ENCODE measurements at regions of chr7 and their contacts with region 1.

Region 1: DNA sequence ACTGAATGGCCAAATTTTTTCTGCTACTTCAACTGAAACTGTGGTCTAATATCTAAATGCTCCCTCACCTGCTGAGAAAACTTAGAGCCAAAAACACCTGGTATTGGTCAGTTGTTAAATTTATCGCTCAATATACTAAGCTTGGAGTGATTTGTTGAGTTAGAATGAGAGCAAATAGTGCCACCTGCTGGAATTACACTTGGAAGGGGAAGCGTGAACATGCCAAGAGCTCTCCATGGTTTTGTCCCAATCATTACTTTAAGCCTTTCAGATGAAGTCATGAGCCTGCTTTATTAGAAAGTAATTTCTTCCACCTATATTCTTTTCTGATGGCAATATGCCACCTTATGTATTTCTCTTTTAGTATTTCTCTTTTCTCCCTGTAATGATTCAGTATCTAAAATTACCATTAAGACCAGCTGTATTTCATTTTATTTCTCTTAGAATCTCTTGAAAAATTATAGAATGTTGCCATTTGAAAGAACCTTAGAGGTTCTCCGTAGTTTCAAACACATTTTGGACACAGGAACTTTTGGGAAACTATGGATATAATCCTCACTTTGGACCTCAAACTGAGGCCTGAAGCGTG is 447.8 kb upstream of the C7orf33 start:
- DNase-seq: peak; percentile 59
- H3K4me3 Mint-ChIP-seq: no peak overlapping the region
- H3K27ac Mint-ChIP-seq: no peak overlapping the region
- H3K4me1 Mint-ChIP-seq: no peaks in the 10 kb centered on the region
- H3K27me3 Mint-ChIP-seq: peaks cover 54% of the 10 kb centered on the region
- CTCF ChIP-seq: peak; percentile 63

Region 2: DNA sequence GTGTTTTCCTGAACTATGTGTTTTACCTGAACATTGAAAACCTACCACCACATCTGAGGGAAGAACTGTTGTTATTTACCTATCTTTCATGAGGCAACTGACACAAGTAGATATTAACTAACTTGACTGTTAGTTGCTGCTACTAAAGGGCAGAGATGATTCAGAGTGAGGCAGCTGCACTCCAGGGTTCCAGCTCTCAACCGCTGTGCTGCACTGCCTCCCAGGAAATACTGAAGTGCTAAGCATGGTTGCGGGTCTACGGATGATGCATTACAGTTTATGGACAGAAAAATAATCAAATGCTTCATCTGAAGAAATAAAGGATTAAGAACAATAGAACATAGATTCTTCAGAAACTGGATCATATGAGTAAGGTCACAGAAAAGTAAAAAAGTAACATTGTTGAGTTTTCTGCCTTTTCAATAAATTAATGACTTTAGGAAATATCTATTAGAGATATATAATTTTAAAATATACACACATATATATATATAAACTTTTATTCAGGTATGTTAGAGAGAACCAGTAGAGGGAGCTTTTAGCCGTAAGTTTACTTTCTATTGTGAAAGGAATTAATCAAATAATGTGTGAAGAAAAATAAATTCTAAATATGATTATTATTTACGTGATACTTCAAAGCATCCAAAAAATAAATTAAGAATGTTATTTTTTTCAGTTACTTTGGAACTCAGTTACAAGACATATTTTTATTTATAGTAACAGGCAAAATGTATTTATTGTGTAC is 1406.1 kb before region 1 on chr7:
- CTCF ChIA-PET with region 1: interaction called, 3 read pairs
- POLR2A ChIA-PET with region 1: no interaction called
- intact Hi-C with region 1: loop called (anchors 2 kb)
- DNase-seq: peak; percentile 22
- H3K4me3 Mint-ChIP-seq: no peak overlapping the region
- H3K27ac Mint-ChIP-seq: no peak overlapping the region
- H3K4me1 Mint-ChIP-seq: no peaks in the 10 kb centered on the region
- H3K27me3 Mint-ChIP-seq: peaks cover 45% of the 10 kb centered on the region
- CTCF ChIP-seq: peak; percentile 27

Region 3: DNA sequence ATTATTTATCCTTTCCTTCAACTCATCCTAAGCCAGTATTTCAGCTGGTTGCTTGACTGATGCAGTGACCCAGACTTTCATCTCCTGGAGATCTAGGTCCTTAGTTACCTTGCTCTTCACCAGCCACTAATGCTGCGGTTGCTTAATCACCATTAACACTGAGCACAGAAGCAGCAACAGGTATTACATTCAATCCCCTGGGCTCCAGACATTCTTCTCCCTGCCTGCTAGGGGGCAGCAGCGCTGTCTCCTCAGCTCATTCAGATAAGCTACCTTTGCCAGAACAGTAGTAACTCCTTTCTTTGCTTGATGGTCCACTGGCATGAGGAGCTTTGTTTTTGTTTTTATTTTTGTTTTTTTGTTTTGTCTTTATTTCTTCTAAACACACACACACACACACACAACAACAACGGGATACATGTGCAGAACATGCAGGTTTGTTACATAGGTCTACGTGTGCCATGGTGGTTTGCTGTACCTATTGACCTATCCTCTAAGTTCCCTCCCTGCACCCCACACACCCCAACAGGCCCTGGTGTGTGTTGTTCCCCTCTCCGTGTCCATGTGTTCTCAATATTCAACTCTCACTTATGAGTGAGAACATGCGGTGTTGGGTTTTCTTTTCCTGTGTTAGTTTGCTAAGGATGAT is 595.4 kb before region 1 on chr7:
- CTCF ChIA-PET with region 1: no interaction called
- POLR2A ChIA-PET with region 1: no interaction called
- intact Hi-C with region 1: loop called (anchors 2 kb)
- DNase-seq: peak; percentile 49
- H3K4me3 Mint-ChIP-seq: no peak overlapping the region
- H3K27ac Mint-ChIP-seq: no peak overlapping the region
- H3K4me1 Mint-ChIP-seq: no peaks in the 10 kb centered on the region
- H3K27me3 Mint-ChIP-seq: peaks cover 5% of the 10 kb centered on the region
- CTCF ChIP-seq: peak; percentile 25

Region 4: GRCh38 chr7:148153616-148154284 is 11.0 kb after region 1 on chr7:
- CTCF ChIA-PET with region 1: interaction called, 26 read pairs
- POLR2A ChIA-PET with region 1: interaction called, 3 read pairs
- intact Hi-C with region 1: no loop called
- DNase-seq: peak; percentile 47
- H3K4me3 Mint-ChIP-seq: no peak overlapping the region
- H3K27ac Mint-ChIP-seq: no peak overlapping the region
- H3K4me1 Mint-ChIP-seq: peaks cover 6% of the 10 kb centered on the region
- H3K27me3 Mint-ChIP-seq: peaks cover 48% of the 10 kb centered on the region
- CTCF ChIP-seq: no peak

Region 5: DNA sequence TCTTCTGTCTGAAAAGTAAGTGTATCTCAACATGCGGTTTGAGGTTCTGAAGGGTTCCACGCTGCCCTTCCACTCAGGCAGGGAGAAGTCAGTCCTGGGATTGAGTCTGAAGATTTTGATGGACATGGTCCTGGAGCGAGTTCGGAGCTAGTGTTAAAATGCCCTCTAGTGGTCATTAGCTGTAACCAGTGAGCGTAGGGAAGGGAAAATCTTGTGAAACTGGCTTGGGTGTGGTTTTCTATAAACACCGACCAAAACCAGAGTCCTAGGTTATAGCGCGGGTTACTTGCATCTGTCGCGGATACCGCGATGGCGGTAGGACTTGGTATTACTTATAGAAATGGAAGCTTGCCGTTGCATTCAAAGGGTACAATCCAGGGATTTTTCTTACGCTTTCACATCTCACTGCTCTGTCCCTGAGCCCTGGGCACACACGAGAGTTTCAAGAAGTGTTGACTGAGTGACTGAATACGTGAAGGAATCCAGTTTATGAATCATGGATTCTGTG is 99.6 kb after region 1 on chr7:
- CTCF ChIA-PET with region 1: interaction called, 25 read pairs
- POLR2A ChIA-PET with region 1: no interaction called
- intact Hi-C with region 1: loop called (anchors 5 kb)
- DNase-seq: peak; percentile 76
- H3K4me3 Mint-ChIP-seq: no peak overlapping the region
- H3K27ac Mint-ChIP-seq: no peak overlapping the region
- H3K4me1 Mint-ChIP-seq: no peaks in the 10 kb centered on the region
- H3K27me3 Mint-ChIP-seq: peaks cover 89% of the 10 kb centered on the region
- CTCF ChIP-seq: peak; percentile 58

Measured in MCF 10A (cell line).